ENCODE measurements at regions of chr9 and their contacts with region 1.

Region 1: GRCh38 chr9:69324549-69325401 is at the start of gene ENTREP1:
- DNase-seq: peak; percentile 75 to 86 (median 77)
- ATAC-seq: peak; percentile 71 to 97 (median 93)
- H3K4me3 ChIP-seq: peak within 1 kb of the TSS; percentile 51 to 87 (median 67)
- H3K27ac ChIP-seq: peak within 1 kb of the TSS; percentile 63 to 93 (median 88)
- H3K4me1 ChIP-seq: peaks cover 0 to 34% (median 4%) of the 10 kb centered on the region in 12 donors
- H3K27me3 ChIP-seq: peaks cover 0 to 23% (median 0%) of the 10 kb centered on the region in 9 donors
- CTCF ChIP-seq: peak in 7 of 12 donors; percentile 13 to 44 (median 35)
- POLR2A ChIP-seq: peak in 1 of 2 donors; percentile 41
- total RNA-seq, gene ENTREP1: 16.6 to 29.1 (median 24.8) TPM

Region 2: DNA sequence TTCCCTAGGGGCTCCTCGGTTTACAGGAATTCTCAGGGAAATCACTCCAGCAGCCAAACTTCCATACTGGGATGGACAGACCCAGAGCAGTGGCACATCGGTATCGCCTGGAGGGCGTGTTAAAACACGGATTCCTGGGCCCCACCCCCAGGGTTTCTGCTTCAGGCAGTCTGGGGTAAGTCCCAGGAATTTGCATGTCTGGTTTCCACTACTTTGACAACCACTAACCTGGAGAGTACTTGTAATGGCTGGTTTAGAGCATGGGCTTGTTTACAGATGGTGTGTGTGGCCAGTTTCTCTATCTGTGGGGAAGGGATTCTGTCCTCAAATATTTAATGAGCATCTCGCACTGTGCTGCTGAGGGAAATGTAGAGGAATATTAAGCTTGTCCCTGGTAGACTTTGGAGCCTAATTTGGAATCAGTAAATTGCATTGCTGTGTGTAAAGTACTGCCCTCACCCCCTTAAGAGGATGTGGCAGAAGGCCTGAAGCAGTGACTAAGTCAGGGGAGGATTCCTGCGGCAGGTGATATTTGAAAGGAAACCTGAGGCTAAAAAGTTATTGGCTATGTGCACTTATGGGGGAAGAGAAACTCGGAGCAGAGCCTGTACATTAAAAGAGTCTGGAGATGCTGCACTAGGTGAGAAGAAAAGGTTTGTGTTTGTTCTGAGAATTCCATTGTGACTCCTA is 169.3 kb before region 1 on chr9:
- intact Hi-C with region 1: no loop called
- DNase-seq: peak in 1 of 5 donors; percentile 1
- ATAC-seq: no peak
- H3K4me3 ChIP-seq: no peak overlapping the region
- H3K27ac ChIP-seq: no peak overlapping the region
- H3K4me1 ChIP-seq: peaks cover 0 to 23% (median 0%) of the 10 kb centered on the region in 12 donors
- H3K27me3 ChIP-seq: no peaks in the 10 kb centered on the region
- CTCF ChIP-seq: no peak
- POLR2A ChIP-seq: no peak

Region 3: GRCh38 chr9:69232135-69232534 is 92.6 kb before region 1 on chr9:
- intact Hi-C with region 1: loop called in 1 of 10 experiments (anchors 10 kb)
- DNase-seq: no peak
- ATAC-seq: peak in 1 of 4 donors; percentile 25
- H3K4me3 ChIP-seq: no peak overlapping the region
- H3K27ac ChIP-seq: peak overlapping the region in 3 of 12 donors; percentile 6 to 24 (median 20)
- H3K4me1 ChIP-seq: peaks cover 0 to 23% (median 0%) of the 10 kb centered on the region in 12 donors
- H3K27me3 ChIP-seq: no peaks in the 10 kb centered on the region
- CTCF ChIP-seq: no peak
- POLR2A ChIP-seq: no peak

Region 4: DNA sequence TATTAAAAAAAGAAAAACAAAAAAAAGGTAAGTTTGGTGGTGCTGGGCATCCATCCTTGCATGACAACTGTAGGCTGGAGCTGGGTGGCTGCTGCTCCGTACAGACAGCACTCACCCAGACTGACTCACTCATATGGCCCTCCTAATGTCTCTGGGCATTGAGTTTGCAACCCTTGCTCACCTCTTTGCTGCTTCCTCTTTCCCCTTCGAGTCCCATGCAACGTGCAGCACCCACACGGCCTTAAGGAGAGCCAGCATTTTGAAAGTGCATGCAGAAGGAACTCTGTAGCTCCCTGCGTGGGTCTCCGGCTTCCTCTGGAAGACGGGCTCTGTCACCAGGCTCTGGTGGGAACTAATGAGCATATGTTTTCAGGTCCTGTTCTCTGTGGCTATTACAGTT is 60.2 kb before region 1 on chr9:
- intact Hi-C with region 1: loop called in 2 of 10 experiments (anchors 5 to 10 kb)
- DNase-seq: no peak
- ATAC-seq: peak in 1 of 4 donors; percentile 13
- H3K4me3 ChIP-seq: no peak overlapping the region
- H3K27ac ChIP-seq: no peak overlapping the region
- H3K4me1 ChIP-seq: peaks cover 0 to 6% (median 0%) of the 10 kb centered on the region in 12 donors
- H3K27me3 ChIP-seq: no peaks in the 10 kb centered on the region
- CTCF ChIP-seq: no peak
- POLR2A ChIP-seq: no peak

Region 5: DNA sequence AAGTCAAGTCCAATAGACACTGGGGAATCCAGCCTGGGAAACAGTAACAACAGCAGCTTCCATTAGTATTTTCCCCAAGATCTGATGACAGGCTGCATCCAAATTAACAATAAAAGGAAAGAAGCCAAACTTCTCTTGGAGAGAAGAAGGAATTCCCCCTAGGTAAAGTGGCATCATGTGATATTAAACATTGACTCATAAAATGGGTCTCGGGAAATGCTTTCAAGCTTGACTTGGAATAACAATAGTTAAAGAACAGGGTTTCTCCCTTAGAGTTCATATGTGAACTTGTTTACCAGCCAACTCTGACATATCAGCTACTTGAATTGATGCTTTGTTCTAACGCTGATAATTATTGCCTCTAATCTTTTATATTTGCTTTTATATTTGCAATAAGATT is 45.7 kb after region 1 on chr9:
- intact Hi-C with region 1: loop called in 4 of 10 experiments (anchors 5 to 10 kb)
- DNase-seq: no peak
- ATAC-seq: no peak
- H3K4me3 ChIP-seq: no peak overlapping the region
- H3K27ac ChIP-seq: peak overlapping the region in 1 of 12 donors; percentile 15
- H3K4me1 ChIP-seq: peaks cover 0 to 29% (median 11%) of the 10 kb centered on the region in 12 donors
- H3K27me3 ChIP-seq: no peaks in the 10 kb centered on the region
- CTCF ChIP-seq: no peak
- POLR2A ChIP-seq: no peak

Region 6: DNA sequence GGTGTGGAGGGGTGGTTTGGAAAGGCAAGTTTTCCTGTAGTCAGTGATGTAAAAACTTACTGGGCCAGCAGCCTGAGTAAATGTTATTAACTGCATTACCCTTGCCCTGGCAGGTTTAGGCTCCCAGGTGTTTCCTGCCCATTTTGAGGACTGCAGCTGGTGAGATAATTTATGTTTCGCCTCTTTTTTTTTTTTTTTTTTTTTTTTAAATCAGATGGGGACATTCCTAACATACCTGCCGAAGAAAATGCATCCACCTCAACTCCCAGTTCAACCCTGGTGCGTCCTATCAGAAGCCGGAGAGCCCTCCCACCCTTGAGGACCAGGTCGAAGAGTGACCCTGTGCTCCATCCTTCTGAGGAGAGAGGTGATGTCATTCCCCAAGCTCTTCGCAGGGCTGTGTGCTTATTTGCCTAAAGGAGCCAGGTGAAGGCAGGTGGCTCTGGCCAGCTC is 60.8 kb after region 1 on chr9:
- intact Hi-C with region 1: loop called in 3 of 10 experiments (anchors 5 to 10 kb)
- DNase-seq: no peak
- ATAC-seq: no peak
- H3K4me3 ChIP-seq: no peak overlapping the region
- H3K27ac ChIP-seq: peak overlapping the region in 1 of 12 donors; percentile 67
- H3K4me1 ChIP-seq: peaks cover 0 to 26% (median 9%) of the 10 kb centered on the region in 12 donors
- H3K27me3 ChIP-seq: no peaks in the 10 kb centered on the region
- CTCF ChIP-seq: no peak
- POLR2A ChIP-seq: no peak

Region 7: DNA sequence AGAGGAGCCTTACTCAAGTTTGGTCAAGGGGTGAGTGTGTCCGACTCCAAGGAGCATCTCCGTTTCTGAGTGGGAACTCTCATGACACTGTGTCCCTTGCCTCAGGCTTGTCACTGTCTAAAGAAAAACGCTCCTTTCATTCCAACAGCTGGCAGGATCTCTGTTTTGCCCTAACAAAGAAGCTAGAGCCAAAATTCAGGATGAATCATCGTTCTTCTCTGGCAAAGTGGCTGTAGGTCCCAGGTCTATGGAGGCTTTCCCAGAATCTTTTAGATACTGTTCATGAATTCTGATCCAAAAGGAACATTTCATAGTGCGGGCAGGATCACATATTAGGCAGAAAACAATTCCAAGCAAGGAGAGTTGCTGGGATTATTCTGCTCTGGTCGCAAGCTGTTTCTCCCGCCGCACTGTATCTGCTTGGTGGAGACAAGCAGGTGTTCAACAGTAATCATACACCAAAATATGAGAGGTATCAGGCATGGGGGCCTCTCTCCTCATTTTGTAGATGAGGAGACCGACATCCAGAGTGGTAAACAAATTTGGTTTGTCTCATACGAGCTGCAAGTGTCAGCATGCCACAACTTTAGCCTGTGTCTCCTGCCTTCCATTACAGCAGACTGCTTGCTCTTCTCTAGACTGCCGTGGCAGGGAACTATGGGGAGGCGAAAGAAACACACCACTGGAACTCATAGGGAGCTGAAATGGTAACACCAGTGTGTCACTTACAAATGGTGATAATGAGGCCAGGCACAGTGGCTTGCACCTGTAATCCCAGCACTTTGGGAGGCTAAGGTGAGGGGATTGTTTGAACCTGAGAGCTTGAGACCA is 72.8 kb after region 1 on chr9:
- intact Hi-C with region 1: loop called in 2 of 10 experiments (anchors 5 to 10 kb)
- DNase-seq: no peak
- ATAC-seq: peak; percentile 17 to 52 (median 39)
- H3K4me3 ChIP-seq: peak overlapping the region in 1 of 12 donors; percentile 3
- H3K27ac ChIP-seq: peak overlapping the region; percentile 47 to 84 (median 67)
- H3K4me1 ChIP-seq: peaks cover 0 to 24% (median 13%) of the 10 kb centered on the region in 12 donors
- H3K27me3 ChIP-seq: no peaks in the 10 kb centered on the region
- CTCF ChIP-seq: no peak
- POLR2A ChIP-seq: no peak

Measured in heart left ventricle (tissue), 16 donors.